Vagina (tissue), 2 donors: ENCODE measurements at regions of chr21 and their contacts with region 1.

Region 1: GRCh38 chr21:33441489-33442477 is 38.0 kb downstream of the TMEM50B start:
- DNase-seq: no peak
- H3K4me3 ChIP-seq: no peak overlapping the region
- H3K27ac ChIP-seq: peak overlapping the region; percentile 60
- H3K4me1 ChIP-seq: peaks cover 18% of the 10 kb centered on the region
- H3K27me3 ChIP-seq: no peaks in the 10 kb centered on the region
- CTCF ChIP-seq: no peak
- POLR2A ChIP-seq: no peak

Region 2: DNA sequence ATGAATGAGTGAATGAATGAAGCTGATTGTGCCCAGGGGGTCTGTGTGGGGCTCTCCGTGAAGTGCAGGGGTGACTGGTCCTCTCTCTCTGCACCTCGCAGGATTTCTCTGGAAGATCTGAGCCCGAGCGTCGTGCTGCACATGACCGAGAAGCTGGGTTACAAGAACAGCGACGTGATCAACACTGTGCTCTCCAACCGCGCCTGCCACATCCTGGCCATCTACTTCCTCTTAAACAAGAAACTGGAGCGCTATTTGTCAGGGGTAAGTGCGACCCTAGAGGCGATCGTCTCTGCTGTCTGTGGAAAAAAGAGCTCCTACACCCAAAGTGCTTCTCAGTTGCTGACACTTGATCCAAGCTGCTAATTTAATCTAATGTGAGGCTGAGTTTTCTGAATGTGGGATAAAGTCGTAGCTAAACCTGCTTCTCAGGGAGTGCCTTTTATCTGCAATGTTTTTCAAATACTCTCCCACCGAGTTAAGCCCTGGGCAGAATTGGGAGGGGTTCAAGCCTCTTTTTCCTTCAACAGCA is 1467.3 kb before region 1 on chr21:
- intact Hi-C with region 1: no loop called
- DNase-seq: no peak
- H3K4me3 ChIP-seq: no peak overlapping the region
- H3K27ac ChIP-seq: no peak overlapping the region
- H3K4me1 ChIP-seq: no peaks in the 10 kb centered on the region
- H3K27me3 ChIP-seq: no peaks in the 10 kb centered on the region
- CTCF ChIP-seq: no peak
- POLR2A ChIP-seq: no peak

Region 3: GRCh38 chr21:33199516-33200217 is 242.1 kb before region 1 on chr21:
- intact Hi-C with region 1: loop called (anchors 10 kb)
- DNase-seq: no peak
- H3K4me3 ChIP-seq: no peak overlapping the region
- H3K27ac ChIP-seq: no peak overlapping the region
- H3K4me1 ChIP-seq: peaks cover 7% of the 10 kb centered on the region
- H3K27me3 ChIP-seq: no peaks in the 10 kb centered on the region
- CTCF ChIP-seq: peak; percentile 41 to 83 (median 54)
- POLR2A ChIP-seq: no peak

Region 4: DNA sequence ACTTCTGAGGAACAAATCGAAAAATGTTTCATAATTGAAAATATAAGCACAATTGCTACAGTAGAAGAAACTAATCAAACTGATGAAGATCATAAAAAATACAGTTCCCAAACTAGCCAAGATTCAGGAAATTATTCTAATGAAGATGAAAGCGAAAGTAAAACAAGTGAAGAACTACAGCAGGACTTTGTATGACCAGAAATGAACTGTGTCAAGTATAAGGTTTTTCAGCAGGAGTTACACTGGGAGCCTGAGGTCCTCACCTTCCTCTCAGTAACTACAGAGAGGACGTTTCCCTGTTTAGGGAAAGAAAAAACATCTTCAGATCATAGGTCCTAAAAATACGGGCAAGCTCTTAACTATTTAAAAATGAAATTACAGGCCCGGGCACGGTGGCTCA is 86.4 kb before region 1 on chr21:
- intact Hi-C with region 1: loop called (anchors 10 kb)
- DNase-seq: no peak
- H3K4me3 ChIP-seq: no peak overlapping the region
- H3K27ac ChIP-seq: no peak overlapping the region
- H3K4me1 ChIP-seq: peaks cover 4% of the 10 kb centered on the region
- H3K27me3 ChIP-seq: no peaks in the 10 kb centered on the region
- CTCF ChIP-seq: no peak
- POLR2A ChIP-seq: no peak